Activated CD8-positive, alpha-beta T cell treated with anti-CD3 and anti-CD28 coated beads for 36 hours (primary cell): ENCODE measurements at regions of chr9 and their contacts with region 1.

Region 1: DNA sequence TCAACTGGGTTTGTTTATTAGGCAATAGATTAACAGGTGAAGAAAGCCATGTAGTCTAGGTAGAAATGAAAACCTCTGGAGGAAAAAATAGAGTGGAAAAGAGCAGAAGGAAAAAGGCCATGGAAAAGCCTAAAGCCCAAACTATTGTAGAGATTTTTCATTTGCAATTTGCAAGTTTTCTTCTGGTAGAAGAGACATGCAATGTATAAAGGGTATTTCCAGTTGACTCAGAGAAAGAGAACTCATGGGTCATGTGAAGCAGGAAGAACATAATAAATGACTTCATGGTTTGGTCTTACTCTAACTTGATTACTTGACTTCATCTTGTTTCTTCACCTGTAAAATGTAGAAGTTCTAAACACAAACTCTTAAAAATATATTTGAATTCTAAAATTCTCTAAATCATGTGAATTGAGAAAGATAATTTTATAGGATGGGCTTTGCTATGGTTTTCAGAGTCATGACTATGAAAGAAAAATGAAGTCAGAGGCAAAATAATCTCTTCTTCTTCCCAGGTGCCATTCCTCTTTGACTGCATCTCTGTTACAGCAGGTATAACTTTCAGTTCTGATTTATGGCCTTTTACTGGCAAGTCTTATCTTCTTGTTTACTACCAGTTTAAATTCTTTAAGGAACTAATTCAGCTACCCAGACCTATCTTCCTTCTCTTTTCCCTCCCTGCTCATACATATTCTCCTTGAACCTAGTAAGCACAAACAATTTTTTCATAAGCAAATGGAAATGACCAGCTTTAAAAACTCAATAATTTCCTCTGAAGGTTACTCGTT is 47.7 kb upstream of the TMC1 start:
- DNase-seq: no peak
- ATAC-seq: peak; percentile 77
- H3K4me3 Mint-ChIP-seq: no peak overlapping the region
- H3K27ac Mint-ChIP-seq: peak overlapping the region; percentile 84
- H3K4me1 Mint-ChIP-seq: peaks cover 38% of the 10 kb centered on the region
- H3K27me3 Mint-ChIP-seq: no peaks in the 10 kb centered on the region
- CTCF ChIP-seq: no peak

Region 2: GRCh38 chr9:72364679-72365524 is 108.8 kb before region 1 on chr9 and contains the start of gene ZFAND5:
- CTCF ChIA-PET with region 1: no interaction called
- POLR2A ChIA-PET with region 1: interaction called, 4 read pairs
- intact Hi-C with region 1: loop called (anchors 10 kb)
- DNase-seq: peak; percentile 97
- ATAC-seq: peak; percentile 85
- H3K4me3 Mint-ChIP-seq: peak within 1 kb of the TSS; percentile 97
- H3K27ac Mint-ChIP-seq: peak within 1 kb of the TSS; percentile 98
- H3K4me1 Mint-ChIP-seq: peaks cover 36% of the 10 kb centered on the region
- H3K27me3 Mint-ChIP-seq: no peaks in the 10 kb centered on the region
- CTCF ChIP-seq: no peak
- total RNA-seq, gene ZFAND5: 79.4 to 88.9 TPM

Region 3: DNA sequence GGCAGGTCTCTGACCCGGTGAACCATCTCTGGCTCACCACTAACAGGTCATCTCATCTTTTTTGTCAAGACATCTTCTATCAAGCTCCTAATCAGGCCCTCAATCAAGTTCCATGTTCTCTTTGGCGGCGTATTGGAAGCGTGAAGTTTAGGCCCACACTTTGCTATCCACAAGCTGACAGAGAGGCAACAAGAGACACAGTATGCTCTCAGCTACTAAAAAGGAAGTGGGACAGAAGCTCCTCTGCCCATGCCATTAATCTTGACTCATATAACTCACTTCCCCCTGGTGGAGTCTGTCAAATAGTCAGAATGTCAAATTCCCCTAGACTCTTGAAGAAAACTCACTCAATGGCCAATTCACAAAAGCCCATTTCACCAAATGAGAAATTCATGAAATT is 29.8 kb before region 1 on chr9:
- CTCF ChIA-PET with region 1: no interaction called
- POLR2A ChIA-PET with region 1: no interaction called
- intact Hi-C with region 1: loop called (anchors 5 kb)
- DNase-seq: peak; percentile 45
- ATAC-seq: peak; percentile 86
- H3K4me3 Mint-ChIP-seq: no peak overlapping the region
- H3K27ac Mint-ChIP-seq: peak overlapping the region; percentile 92
- H3K4me1 Mint-ChIP-seq: peaks cover 29% of the 10 kb centered on the region
- H3K27me3 Mint-ChIP-seq: peaks cover 6% of the 10 kb centered on the region
- CTCF ChIP-seq: no peak

Region 4: DNA sequence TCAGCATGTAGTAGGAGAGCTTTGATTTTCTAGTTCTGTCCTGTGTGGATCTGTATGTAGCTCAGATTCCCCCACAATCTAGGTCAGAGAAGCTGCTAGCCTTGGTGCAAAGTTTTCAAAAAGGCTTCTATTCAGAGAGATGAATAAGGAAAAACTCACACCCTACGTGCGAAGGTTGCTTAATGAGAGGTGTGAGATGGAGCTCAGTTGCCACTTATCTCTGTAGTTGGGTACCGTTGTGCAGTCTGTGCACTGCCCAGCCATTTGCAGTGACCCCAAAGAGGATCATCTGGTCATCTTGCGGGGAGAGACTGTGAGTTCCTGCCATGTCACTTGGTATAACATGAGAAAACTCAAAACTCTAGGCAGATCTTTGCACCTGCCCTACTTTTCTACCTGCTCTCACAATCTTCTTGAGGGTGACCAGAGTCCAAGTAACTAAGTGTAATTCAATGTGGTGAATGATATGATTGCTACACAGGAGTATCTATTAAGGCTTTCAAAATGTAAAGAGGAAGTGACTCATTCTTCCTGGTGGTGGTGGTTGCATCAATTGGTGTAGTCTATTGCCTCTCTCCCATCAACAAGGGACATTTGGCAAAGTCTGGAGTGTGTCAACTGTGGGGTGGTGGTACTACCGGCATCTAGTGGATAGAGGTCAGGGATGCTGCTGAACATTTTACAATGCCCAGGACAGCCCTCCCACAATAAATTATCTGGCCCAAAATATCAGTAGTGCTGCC is 112.9 kb after region 1 on chr9:
- CTCF ChIA-PET with region 1: no interaction called
- POLR2A ChIA-PET with region 1: no interaction called
- intact Hi-C with region 1: loop called (anchors 10 kb)
- DNase-seq: peak; percentile 54
- ATAC-seq: peak; percentile 75
- H3K4me3 Mint-ChIP-seq: no peak overlapping the region
- H3K27ac Mint-ChIP-seq: peak overlapping the region; percentile 40
- H3K4me1 Mint-ChIP-seq: peaks cover 50% of the 10 kb centered on the region
- H3K27me3 Mint-ChIP-seq: no peaks in the 10 kb centered on the region
- CTCF ChIP-seq: no peak